ENCODE measurements at regions of chr16 and their contacts with region 1.

Region 1: GRCh38 chr16:10929853-10930754 is 12.2 kb downstream of the DEXI start:
- DNase-seq: no peak
- ATAC-seq: peak; percentile 14
- H3K4me3 Mint-ChIP-seq: peak overlapping the region; percentile 5
- H3K27ac Mint-ChIP-seq: peak overlapping the region; percentile 71
- H3K4me1 Mint-ChIP-seq: peaks cover 54% of the 10 kb centered on the region
- H3K27me3 Mint-ChIP-seq: no peaks in the 10 kb centered on the region
- CTCF ChIP-seq: no peak

Region 2: DNA sequence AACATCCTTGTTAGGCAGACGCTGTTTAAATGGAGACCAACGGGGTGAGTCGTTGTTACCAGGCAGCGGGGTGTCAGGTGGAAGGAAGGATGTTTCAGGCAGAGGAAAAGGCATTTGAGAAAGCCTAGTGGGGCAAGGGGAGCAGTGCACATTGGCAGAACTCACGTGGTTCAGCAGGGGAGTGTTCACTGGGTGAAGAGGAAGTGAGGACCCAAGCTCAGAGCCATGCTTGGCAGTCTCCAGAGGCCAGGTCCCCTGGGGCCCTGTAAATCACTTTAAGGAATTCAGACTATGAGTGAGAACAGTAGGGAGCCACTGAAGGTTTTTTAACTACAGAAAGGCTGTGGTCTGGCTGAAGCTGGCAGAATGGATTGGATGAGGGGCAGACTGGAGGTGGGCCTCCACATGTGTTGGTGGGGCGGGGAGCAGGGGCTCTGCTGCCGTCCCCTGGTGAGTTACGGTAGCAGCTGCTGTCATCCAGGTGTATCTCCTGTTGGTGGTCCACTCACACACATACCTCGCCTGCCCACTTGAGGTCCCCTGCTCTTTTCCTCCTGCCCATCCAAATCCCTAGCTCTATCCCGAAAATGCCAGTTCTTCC is 19.4 kb after region 1 on chr16:
- CTCF ChIA-PET with region 1: interaction called, 4 read pairs
- POLR2A ChIA-PET with region 1: interaction called, 15 read pairs
- intact Hi-C with region 1: no loop called
- DNase-seq: peak; percentile 74
- ATAC-seq: peak; percentile 95
- H3K4me3 Mint-ChIP-seq: peak overlapping the region; percentile 75
- H3K27ac Mint-ChIP-seq: peak overlapping the region; percentile 94
- H3K4me1 Mint-ChIP-seq: peaks cover 70% of the 10 kb centered on the region
- H3K27me3 Mint-ChIP-seq: no peaks in the 10 kb centered on the region
- CTCF ChIP-seq: no peak

Region 3: DNA sequence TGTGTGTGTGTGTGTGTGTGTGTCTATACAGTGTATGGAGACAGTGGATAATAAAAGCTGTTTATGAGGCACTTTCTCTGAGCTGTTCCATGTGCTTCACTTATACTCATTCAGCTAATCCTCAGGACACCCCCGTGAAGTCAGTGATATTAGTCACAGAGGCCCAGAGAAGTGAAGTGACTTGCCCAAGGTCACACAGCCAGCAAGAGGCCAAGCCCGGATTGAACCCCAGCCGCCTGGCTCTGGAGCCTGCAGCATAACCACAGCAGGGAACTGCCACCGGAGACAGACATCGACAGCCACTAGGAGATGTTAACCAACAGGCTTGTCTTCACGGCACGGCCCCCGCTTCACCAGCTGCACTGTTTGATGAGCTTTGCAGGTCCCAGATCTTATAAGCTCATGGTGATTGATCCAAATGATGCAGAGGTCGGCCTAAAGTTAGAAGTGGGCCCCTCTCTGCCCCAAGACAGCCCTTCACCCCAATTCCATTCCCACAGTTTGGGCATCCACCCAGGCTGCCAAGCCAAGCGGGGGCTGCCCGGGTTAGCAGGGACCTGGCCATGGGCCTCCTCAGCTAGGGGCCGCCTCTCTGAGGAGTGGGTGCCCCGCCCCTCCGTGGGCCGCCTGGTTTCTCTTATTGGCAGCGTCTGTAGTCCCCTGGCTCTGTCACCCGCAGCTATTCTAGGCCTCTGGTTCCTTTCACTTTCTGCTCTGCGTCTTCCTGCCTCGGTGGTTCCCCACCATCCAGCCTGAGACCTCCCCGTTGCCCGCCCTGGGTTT is 295.0 kb after region 1 on chr16:
- CTCF ChIA-PET with region 1: no interaction called
- POLR2A ChIA-PET with region 1: no interaction called
- intact Hi-C with region 1: no loop called
- DNase-seq: peak; percentile 65
- ATAC-seq: peak; percentile 91
- H3K4me3 Mint-ChIP-seq: peak overlapping the region; percentile 69
- H3K27ac Mint-ChIP-seq: peak overlapping the region; percentile 83
- H3K4me1 Mint-ChIP-seq: peaks cover 39% of the 10 kb centered on the region
- H3K27me3 Mint-ChIP-seq: no peaks in the 10 kb centered on the region
- CTCF ChIP-seq: no peak

Measured in activated B cell treated with CpG ODN at 0.5 μM for 24 hours (primary cell).